A549 (cell line): ENCODE measurements at regions of chr17 and their contacts with region 1.

Region 1: GRCh38 chr17:18017958-18018357 is 21.0 kb downstream of the ATPAF2 start:
- DNase-seq: no peak
- ATAC-seq: no peak
- H3K4me3 ChIP-seq: no peak overlapping the region
- H3K27ac ChIP-seq: no peak overlapping the region
- H3K4me1 ChIP-seq: no peaks in the 10 kb centered on the region
- CTCF ChIP-seq: no peak
- EP300 ChIP-seq: no peak
- POLR2A ChIP-seq: no peak
- RAD21 ChIP-seq: no peak

Region 2: GRCh38 chr17:17985555-17985954 is 32.4 kb before region 1 on chr17:
- CTCF ChIA-PET with region 1: interaction called, 10 read pairs
- POLR2A ChIA-PET with region 1: no interaction called
- DNase-seq: peak in 1 of 2 experiments; percentile 29
- ATAC-seq: peak in 1 of 2 experiments; percentile 48; a peak in 2 of 6 replicates
- H3K4me3 ChIP-seq: no peak overlapping the region
- H3K27ac ChIP-seq: peak overlapping the region in 1 of 2 experiments; percentile 33; a peak in 3 of 6 replicates
- H3K4me1 ChIP-seq: peaks cover 15% of the 10 kb centered on the region
- CTCF ChIP-seq: peak; percentile 28; the same call in 2 of the 3 replicates
- EP300 ChIP-seq: no peak
- POLR2A ChIP-seq: no peak
- RAD21 ChIP-seq: peak; percentile 28 to 65; a peak in 3 of 5 replicates

Region 3: DNA sequence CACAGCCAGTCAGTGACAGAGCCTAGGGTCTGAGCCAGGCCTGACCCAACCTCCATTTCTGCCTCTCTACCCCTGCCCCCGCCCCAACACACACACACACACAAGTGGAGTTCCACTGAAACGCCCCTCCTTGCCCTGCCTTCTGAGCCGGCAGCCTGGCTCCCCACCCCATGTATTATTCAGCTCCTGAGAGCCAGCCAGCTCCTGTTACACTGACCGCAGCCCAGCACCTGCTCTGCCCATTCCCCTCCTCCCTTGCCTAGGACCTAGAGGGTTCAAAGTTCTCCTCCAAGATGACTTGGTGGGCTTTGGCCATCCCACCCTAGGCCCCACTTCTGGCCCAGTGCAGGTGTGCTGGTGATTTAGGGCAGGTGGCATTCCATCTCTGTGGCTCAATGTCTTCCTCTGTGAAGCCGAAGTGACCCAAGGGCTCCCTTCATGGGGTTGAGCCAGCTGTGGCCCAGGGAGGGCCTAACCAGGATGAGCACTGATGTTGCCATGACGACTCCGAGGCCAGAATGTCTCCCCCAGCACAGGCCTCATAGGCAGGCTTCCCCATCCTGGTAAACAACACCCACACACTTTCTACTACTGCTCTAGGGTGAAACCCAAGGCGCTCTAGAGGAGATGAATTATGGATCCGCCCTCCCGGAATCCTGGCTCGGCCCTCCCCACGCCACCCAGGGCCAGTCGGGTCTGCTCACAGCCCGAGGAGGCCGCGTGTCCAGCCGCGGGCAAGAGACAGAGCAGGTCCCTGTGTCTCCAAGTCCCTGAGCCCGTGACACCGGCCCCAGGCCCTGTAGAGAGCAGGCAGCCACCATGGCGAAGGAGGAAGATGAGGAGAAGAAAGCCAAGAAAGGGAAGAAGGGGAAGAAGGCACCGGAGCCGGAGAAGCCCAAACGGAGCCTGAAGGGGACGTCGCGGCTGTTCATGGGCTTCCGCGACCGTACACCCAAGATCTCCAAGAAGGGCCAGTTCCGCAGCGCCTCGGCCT is 100.3 kb after region 1 on chr17:
- CTCF ChIA-PET with region 1: no interaction called
- POLR2A ChIA-PET with region 1: no interaction called
- DNase-seq: no peak
- ATAC-seq: 0 out of 6 replicates have a peak, but pooled peaks of 1 of the 2 experiments have one; percentile 6
- H3K4me3 ChIP-seq: no peak overlapping the region
- H3K27ac ChIP-seq: no peak overlapping the region
- H3K4me1 ChIP-seq: no peaks in the 10 kb centered on the region
- CTCF ChIP-seq: no peak
- EP300 ChIP-seq: no peak
- POLR2A ChIP-seq: no peak
- RAD21 ChIP-seq: no peak